ENCODE measurements at regions of chr16 and their contacts with region 1.

Region 1: GRCh38 chr16:56608043-56608875 is at the start of gene MT2A:
- DNase-seq: peak; percentile 97
- ATAC-seq: peak; percentile 59
- H3K4me3 ChIP-seq: peak within 1 kb of the TSS; percentile 72
- H3K27ac ChIP-seq: peak within 1 kb of the TSS; percentile 99
- H3K4me1 ChIP-seq: peaks cover 30% of the 10 kb centered on the region
- H3K27me3 ChIP-seq: no peaks in the 10 kb centered on the region
- CTCF ChIP-seq: no peak
- POLR2A ChIP-seq: peak; percentile 96
- RAD21 ChIP-seq: no peak
- total RNA-seq, gene MT2A: 25.5 and 55.5 TPM in 2 replicates

Region 2: DNA sequence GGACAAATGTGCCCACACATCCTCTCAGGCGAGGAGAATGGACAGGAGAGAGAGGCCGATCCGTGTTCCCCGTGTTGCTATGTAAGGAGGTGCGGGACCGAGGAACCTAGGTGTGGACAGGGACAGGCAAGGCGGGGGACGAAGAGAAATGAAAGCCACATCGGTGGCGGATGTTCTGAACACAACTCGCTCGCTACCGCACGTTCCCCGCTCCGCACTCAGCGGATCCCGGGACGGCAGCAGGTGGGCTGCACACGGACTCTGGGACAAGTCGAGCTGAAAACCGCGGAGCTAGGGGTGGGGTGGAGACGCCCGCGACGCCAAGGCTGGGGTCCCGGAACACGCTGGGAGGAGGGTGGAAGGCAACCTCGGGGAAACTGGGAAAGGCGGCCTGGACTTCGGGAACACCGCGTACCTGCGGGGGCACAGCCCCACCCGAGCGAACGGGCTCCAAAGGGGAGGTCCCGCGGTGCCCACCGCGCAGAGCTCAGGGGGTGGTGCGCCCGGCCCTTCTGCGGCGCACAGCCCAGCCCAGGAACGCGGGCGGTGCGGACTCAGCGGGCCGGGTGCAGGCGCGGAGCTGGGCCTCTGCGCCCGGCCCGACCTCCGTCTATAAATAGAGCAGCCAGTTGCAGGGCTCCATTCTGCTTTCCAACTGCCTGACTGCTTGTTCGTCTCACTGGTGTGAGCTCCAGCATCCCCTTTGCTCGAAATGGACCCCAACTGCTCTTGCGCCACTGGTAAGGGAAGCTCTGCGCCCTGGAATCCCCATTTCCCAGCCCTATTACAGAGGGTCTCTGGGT is 17.1 kb after region 1 on chr16 and contains the start of gene MT1E:
- CTCF ChIA-PET with region 1: interaction called, 3 read pairs
- POLR2A ChIA-PET with region 1: interaction called, 37 read pairs
- dilution Hi-C with region 1: no loop called
- in situ Hi-C with region 1: no loop called
- intact Hi-C with region 1: loop called (anchors 2 kb)
- DNase-seq: peak; percentile 76
- ATAC-seq: peak; percentile 91
- H3K4me3 ChIP-seq: peak within 1 kb of the TSS; percentile 51
- H3K27ac ChIP-seq: peak within 1 kb of the TSS; percentile 85
- H3K4me1 ChIP-seq: peaks cover 17% of the 10 kb centered on the region
- H3K27me3 ChIP-seq: no peaks in the 10 kb centered on the region
- CTCF ChIP-seq: no peak
- POLR2A ChIP-seq: peak; percentile 95
- RAD21 ChIP-seq: no peak
- total RNA-seq, gene MT1E: 137 and 166 TPM in 2 replicates